CD8-positive, alpha-beta memory T cell (primary cell): ENCODE measurements at regions of chr11 and their contacts with region 1.

Region 1: GRCh38 chr11:65779851-65780577 is 762 bp downstream of the AP5B1 start:
- DNase-seq: peak; percentile 66 to 83 (median 75)
- H3K4me3 ChIP-seq: peak overlapping the region; percentile 76
- H3K4me3 Mint-ChIP-seq: peak overlapping the region; percentile 68 to 92 (median 84)
- H3K27ac ChIP-seq: peak overlapping the region; percentile 64
- H3K27ac Mint-ChIP-seq: peak overlapping the region in 7 of 8 donors; percentile 23 to 87 (median 61)
- H3K4me1 ChIP-seq: peaks cover 12% of the 10 kb centered on the region
- H3K4me1 Mint-ChIP-seq: peaks cover 1 to 35% (median 6%) of the 10 kb centered on the region in 3 donors
- H3K27me3 ChIP-seq: no peaks in the 10 kb centered on the region
- H3K27me3 Mint-ChIP-seq: no peaks in the 10 kb centered on the region

Region 2: DNA sequence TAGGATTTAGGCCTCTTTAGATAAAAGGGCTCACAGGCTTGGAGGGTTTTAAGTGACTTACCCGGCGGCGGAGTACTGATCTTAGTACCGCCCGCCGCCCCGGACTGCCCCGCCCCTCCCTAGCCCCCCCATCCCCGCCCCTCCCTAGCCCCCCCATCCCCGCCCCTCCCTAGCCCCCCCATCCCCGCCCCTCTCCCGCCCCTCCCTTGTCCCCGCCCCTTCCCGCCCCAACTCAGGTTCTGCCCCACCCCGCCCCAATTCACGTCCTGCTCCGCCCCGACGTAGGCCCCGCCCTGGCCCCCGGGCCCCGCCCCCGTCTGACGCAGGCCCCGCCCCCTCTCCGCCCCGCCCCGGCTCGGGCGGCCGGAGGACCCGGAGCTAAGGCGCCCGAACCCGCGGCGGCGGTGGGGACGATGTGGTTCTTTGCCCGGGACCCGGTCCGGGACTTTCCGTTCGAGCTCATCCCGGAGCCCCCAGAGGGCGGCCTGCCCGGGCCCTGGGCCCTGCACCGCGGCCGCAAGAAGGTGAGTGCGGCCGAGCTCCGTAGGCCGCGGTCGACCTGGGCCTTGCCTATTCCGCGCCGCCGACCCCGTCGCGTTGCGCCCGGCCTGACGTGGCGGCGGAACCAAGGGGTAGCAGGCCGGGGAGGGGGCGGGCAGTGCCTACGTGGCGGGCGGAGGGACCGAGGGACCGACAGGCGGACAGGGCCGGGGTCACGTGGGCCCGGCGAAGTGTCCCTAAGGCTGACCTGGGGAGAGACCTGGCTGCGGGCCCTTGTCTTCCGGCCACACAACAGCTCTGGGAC is 255.1 kb before region 1 on chr11 and contains the start of gene SCYL1:
- CTCF ChIA-PET with region 1: no interaction called
- POLR2A ChIA-PET with region 1: no interaction called
- DNase-seq: peak; percentile 72 to 88 (median 76)
- H3K4me3 ChIP-seq: peak within 1 kb of the TSS; percentile 75
- H3K4me3 Mint-ChIP-seq: peak within 1 kb of the TSS; percentile 81 to 91 (median 85)
- H3K27ac ChIP-seq: peak within 1 kb of the TSS; percentile 76
- H3K27ac Mint-ChIP-seq: peak within 1 kb of the TSS; percentile 73 to 97 (median 92)
- H3K4me1 ChIP-seq: peaks cover 52% of the 10 kb centered on the region
- H3K4me1 Mint-ChIP-seq: peaks cover 45 to 62% (median 46%) of the 10 kb centered on the region in 3 donors
- H3K27me3 ChIP-seq: no peaks in the 10 kb centered on the region
- H3K27me3 Mint-ChIP-seq: peaks cover 0 to 1% of the 10 kb centered on the region in 2 donors
- total RNA-seq, gene SCYL1: 85.1 to 88.5 TPM

Region 3: DNA sequence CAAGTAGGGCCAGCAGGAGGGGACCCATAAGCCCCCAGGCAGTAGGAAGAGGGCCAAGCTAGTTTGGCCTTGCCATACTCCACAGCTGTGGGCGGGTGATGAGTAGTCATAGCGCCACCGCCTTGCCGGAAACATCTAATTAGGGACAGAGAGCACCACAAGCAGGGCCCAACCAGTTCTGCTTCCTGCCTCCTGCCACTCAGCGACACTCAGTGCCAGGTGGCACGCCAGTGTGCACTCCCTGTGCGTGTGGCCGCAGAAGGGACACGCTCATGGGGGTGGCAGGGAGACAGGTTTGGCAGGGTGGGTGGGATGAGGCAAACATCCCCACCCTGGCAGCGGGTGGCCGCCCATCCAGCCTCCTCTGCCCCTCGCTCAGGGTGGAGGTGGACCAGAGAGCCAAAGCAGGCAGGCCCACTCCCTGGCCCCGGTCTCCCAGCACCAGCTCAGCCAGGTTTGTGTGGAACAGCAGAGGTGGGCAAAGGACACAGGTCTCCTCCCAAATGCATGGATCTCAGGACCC is 11.7 kb after region 1 on chr11:
- CTCF ChIA-PET with region 1: interaction called, 26 read pairs
- POLR2A ChIA-PET with region 1: no interaction called
- DNase-seq: peak in 1 of 5 donors; percentile 29
- H3K4me3 ChIP-seq: no peak overlapping the region
- H3K4me3 Mint-ChIP-seq: no peak overlapping the region
- H3K27ac ChIP-seq: no peak overlapping the region
- H3K27ac Mint-ChIP-seq: peak overlapping the region in 2 of 8 donors; percentile 33 to 65
- H3K4me1 ChIP-seq: peaks cover 14% of the 10 kb centered on the region
- H3K4me1 Mint-ChIP-seq: peaks cover 10 to 25% (median 10%) of the 10 kb centered on the region in 3 donors
- H3K27me3 ChIP-seq: peaks cover 21% of the 10 kb centered on the region
- H3K27me3 Mint-ChIP-seq: peaks cover 21 to 45% of the 10 kb centered on the region in 2 donors

Region 4: DNA sequence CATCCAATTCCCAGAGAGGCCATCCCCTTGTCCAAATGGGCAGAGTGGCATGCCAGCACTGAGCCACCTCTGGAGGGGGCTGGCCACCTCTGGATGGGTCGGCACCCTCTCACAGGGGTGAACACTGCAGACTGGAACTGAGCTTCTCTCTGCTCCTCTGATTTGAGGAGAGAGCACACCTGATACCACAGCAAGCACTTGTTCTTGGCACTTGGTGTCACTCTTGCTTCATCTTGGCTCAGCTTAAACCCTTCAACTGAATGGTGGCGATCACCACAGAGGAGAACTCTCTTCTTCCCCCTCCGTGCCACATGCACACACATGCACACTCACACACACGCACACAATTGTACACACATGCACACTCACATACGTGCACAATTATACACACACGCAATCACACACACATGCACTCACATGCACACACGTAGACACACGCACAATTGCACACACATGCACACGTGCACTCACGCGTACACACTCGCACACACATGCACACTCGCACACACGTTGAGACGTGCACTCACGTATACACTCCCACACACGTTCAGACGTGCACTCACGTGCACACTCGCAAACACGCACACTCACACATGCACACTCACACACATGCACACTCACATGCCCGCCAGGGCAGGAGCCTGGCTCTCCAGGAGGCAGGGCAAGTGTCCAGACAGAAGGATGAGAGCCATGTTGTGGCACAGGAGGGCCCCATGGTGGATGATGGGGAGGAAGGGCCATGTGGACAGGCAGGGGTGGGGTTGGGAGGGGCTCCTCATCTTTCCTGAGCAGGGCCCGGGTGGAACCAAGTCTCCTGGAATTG is 30.2 kb after region 1 on chr11:
- CTCF ChIA-PET with region 1: interaction called, 47 read pairs
- POLR2A ChIA-PET with region 1: no interaction called
- DNase-seq: no peak
- H3K4me3 ChIP-seq: no peak overlapping the region
- H3K4me3 Mint-ChIP-seq: peak overlapping the region in 1 of 7 donors; percentile 42
- H3K27ac ChIP-seq: no peak overlapping the region
- H3K27ac Mint-ChIP-seq: peak overlapping the region in 2 of 8 donors; percentile 13 to 58
- H3K4me1 ChIP-seq: no peaks in the 10 kb centered on the region
- H3K4me1 Mint-ChIP-seq: no peaks in the 10 kb centered on the region
- H3K27me3 ChIP-seq: peaks cover 8% of the 10 kb centered on the region
- H3K27me3 Mint-ChIP-seq: peaks cover 10 to 12% of the 10 kb centered on the region in 2 donors

Region 5: GRCh38 chr11:65817835-65818742 is 38.1 kb after region 1 on chr11:
- CTCF ChIA-PET with region 1: interaction called, 47 read pairs
- POLR2A ChIA-PET with region 1: interaction called, 5 read pairs
- DNase-seq: peak; percentile 87 to 97 (median 93)
- H3K4me3 ChIP-seq: peak overlapping the region; percentile 62
- H3K4me3 Mint-ChIP-seq: peak overlapping the region; percentile 74 to 85 (median 81)
- H3K27ac ChIP-seq: peak overlapping the region; percentile 53
- H3K27ac Mint-ChIP-seq: peak overlapping the region in 7 of 8 donors; percentile 70 to 90 (median 77)
- H3K4me1 ChIP-seq: peaks cover 10% of the 10 kb centered on the region
- H3K4me1 Mint-ChIP-seq: peaks cover 8 to 11% (median 10%) of the 10 kb centered on the region in 3 donors
- H3K27me3 ChIP-seq: no peaks in the 10 kb centered on the region
- H3K27me3 Mint-ChIP-seq: no peaks in the 10 kb centered on the region

Region 6: GRCh38 chr11:65833297-65834030 is 53.5 kb after region 1 on chr11 and contains the start of gene SNX32:
- CTCF ChIA-PET with region 1: interaction called, 14 read pairs
- POLR2A ChIA-PET with region 1: no interaction called
- DNase-seq: peak; percentile 90 to 94 (median 91)
- H3K4me3 ChIP-seq: peak within 1 kb of the TSS; percentile 57
- H3K4me3 Mint-ChIP-seq: no peak within 1 kb of the TSS
- H3K27ac ChIP-seq: no peak within 1 kb of the TSS
- H3K27ac Mint-ChIP-seq: peak within 1 kb of the TSS in 6 of 8 donors; percentile 15 to 79 (median 67)
- H3K4me1 ChIP-seq: peaks cover 16% of the 10 kb centered on the region
- H3K4me1 Mint-ChIP-seq: peaks cover 8 to 14% (median 13%) of the 10 kb centered on the region in 3 donors
- H3K27me3 ChIP-seq: no peaks in the 10 kb centered on the region
- H3K27me3 Mint-ChIP-seq: peaks cover 0 to 2% of the 10 kb centered on the region in 2 donors
- total RNA-seq, gene SNX32: 2.0 to 2.8 TPM

Region 7: DNA sequence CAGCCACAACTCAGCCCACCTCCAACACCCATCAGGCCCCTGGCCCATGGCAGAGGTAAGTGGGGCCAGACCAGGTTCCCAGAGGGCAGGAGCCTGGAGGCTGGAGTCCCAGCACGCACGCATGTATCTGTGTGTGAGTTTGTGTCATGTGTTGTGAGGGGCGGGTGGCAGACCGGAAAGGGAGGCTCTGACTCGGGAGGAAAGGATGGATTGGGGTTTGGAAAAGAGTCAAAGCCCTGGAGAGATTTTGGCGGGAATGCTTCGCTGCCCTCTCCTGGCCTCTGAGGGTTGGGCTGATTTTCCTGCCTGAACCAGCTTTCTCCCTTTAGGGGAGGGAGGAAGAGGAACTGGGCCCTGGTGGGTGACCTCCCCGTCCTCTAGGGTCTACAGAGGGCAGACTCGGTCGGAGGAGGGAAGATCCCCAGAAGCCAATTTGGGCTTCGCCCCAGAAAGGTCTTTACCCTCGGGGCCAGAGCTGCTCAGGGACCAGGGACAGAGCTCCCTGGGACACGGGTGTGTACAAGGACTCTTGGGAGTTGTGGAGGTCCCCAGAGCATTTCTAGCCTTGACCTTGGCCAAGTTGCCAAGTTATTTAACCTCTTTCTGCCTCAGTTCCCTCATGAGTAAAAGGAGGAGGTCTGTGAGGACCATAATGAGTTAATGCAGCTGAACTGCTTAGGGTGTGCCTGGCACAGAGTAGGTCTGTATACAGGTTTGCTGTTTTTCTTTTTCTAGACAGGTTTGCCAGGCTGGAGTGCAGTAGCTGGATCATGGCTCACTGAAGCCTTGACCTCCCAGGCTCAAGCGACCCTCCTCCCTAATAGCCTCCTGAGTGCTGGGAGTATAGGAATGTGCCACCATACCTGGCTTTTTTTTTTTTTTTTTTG is 131.9 kb after region 1 on chr11:
- CTCF ChIA-PET with region 1: no interaction called
- POLR2A ChIA-PET with region 1: no interaction called
- DNase-seq: no peak
- H3K4me3 ChIP-seq: no peak overlapping the region
- H3K4me3 Mint-ChIP-seq: no peak overlapping the region
- H3K27ac ChIP-seq: no peak overlapping the region
- H3K27ac Mint-ChIP-seq: no peak overlapping the region
- H3K4me1 ChIP-seq: peaks cover 11% of the 10 kb centered on the region
- H3K4me1 Mint-ChIP-seq: peaks cover 16 to 29% (median 23%) of the 10 kb centered on the region in 3 donors
- H3K27me3 ChIP-seq: no peaks in the 10 kb centered on the region
- H3K27me3 Mint-ChIP-seq: peaks cover 3 to 14% of the 10 kb centered on the region in 2 donors